A549 (cell line): ENCODE measurements at regions of chr6 and their contacts with region 1.

Region 1: DNA sequence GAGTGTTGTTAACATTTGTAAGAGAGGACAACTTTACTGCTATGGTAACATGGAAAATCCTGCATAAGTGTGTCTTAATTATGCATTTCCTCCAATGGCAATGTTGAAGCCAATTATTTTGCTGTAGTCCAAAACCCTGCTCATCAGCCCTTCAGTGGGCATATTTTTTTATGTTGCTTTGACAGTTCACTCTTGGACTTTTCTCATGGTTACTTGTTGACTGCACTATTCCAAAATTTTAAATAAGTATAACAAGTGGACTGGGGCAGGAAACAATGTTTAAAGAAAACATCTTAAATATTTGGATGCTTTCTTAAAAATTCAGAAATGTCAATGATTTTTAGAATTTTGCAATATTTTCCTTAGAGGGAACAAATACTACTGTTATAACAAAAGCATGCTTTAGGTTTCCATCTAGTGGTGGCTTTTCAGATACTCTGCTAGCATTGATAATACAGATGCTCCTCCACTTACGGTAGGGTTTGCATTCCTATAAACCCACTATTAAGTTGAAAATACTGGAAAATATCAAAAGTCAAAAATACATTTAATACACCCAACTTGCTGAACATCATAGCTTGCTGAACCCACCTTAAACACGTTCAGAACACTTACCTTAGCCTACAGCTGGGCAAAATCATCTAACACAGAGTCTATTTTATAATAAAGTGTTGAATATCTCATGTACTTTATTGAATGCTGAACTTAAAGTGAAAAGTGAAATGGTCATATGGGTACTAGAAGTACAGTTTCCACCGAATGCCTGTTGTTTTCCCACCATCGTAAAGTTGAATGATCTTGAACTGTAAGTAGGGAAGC is 86.4 kb downstream of the ADGRG6 start:
- DNase-seq: peak in 1 of 2 experiments; percentile 55
- ATAC-seq: peak; percentile 78 to 86; a peak in 5 of 6 replicates
- H3K4me3 ChIP-seq: no peak overlapping the region
- H3K27ac ChIP-seq: peak overlapping the region; percentile 54 to 73
- H3K4me1 ChIP-seq: peaks cover 60% of the 10 kb centered on the region
- CTCF ChIP-seq: peak; percentile 65
- EP300 ChIP-seq: no peak
- POLR2A ChIP-seq: no peak
- RAD21 ChIP-seq: peak; percentile 77 to 80

Region 2: DNA sequence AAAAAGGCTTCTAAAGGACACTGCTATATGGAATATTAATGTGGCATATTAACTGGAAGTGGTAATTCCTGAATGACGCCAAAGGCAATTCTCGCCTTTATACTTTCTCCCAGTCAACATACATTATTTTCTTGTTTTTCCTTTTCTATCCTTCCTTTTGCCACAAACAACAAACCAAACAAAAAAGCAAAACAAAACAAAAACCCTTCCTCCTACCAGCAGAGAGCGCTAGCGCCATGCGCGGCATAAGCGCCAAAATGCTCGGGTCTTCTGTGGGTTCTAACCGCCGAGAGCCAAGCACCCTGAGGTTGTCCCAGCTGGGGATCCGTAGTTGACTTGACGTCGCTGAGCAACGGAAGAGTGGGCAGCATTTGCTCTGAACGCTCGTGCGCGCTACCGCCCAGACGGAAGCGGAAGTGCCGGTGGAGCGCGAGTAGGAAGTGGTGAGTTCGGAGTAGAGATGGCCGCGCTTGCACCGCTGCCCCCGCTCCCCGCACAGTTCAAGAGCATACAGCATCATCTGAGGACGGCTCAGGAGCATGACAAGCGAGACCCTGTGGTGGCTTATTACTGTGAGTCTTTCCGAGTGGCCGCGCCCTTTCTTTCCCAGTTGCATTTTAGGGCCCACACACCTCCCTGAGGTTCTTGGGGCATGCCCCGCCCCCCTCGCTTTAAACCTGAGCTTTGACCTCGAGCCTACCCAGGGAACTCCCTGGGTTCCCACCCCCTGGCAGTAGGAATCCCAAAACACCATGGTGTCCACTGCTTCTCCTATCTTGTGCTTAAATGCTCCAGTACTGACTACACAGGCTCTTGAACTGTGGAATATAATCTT is 241.2 kb before region 1 on chr6 and contains the starts of genes NMBR and VTA1:
- CTCF ChIA-PET with region 1: interaction called, 19 read pairs
- POLR2A ChIA-PET with region 1: no interaction called
- DNase-seq: peak; percentile 83 to 99
- ATAC-seq: peak; percentile 100
- H3K4me3 ChIP-seq: peak within 1 kb of the TSS; percentile 78
- H3K27ac ChIP-seq: peak within 1 kb of the TSS; percentile 78 to 91
- H3K4me1 ChIP-seq: peaks cover 20% of the 10 kb centered on the region; the same call in 2 of the 3 replicates
- CTCF ChIP-seq: peak; percentile 90
- EP300 ChIP-seq: no peak
- POLR2A ChIP-seq: peak; percentile 64
- RAD21 ChIP-seq: peak; percentile 91 to 92
- polyA plus RNA-seq, gene NMBR: not detected in 2 replicates
- polyA plus RNA-seq, gene VTA1: 85.3 and 88.0 TPM in 2 replicates

Region 3: DNA sequence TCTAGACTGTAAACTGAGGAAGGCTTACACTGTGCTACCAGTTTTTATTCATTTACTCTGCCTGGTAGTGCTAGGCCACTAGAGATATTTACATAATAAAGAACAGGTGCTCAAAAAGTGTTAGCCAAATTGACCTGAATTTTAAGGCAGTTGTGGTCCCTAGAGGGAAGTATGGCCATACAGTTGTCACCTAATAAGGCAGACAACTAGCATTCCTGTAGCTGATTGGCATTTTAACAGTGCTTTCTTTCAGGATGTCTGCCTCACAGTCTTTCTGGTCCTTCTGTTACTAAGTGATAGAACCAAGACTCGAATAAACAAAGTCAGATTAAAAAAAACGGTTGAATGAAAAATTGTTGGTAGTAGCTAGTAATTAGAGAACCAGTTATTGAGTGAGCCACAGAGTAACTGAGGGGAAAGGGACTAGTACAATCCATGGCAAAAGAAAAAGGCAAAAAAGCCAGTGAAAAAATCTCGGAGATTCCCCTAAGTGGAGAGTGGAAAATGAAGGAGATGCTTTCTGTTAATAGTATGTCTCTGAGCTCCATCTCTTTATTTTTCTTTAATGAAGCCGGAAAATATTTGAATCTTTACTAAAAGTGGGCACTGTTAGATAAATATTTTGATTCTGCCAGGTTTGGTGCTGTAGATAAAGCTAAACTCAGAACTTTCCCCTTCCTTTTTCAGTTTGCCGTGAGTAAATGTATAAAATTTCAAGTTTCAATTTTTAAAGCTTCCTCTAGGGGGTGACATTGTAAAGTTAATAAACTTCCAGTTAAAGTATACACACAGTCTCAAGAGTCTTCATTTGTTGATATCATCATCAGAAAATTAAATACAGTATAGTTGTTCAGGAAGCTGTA is 232.1 kb before region 1 on chr6:
- CTCF ChIA-PET with region 1: interaction called, 22 read pairs
- POLR2A ChIA-PET with region 1: no interaction called
- DNase-seq: peak; percentile 21 to 26
- ATAC-seq: peak; percentile 70 to 83; a peak in 5 of 6 replicates
- H3K4me3 ChIP-seq: no peak overlapping the region
- H3K27ac ChIP-seq: peak overlapping the region; percentile 16 to 68; a peak in 4 of 6 replicates
- H3K4me1 ChIP-seq: peaks cover 26% of the 10 kb centered on the region; the same call in 2 of the 3 replicates
- CTCF ChIP-seq: peak; percentile 47; the same call in 2 of the 3 replicates
- EP300 ChIP-seq: no peak
- POLR2A ChIP-seq: no peak
- RAD21 ChIP-seq: peak; percentile 63